Activated T-helper 2 cell treated with anti-CD3 and anti-CD28 coated beads, Interferon-gamma antibody, Interleukin-2, Interleukin-4, amounts not matched to agents 10 μg/mL and 5 μg/mL and 100 μg/mL, durations not matched to agents 14 hours and 24 hours and 36 hours (primary cell): ENCODE measurements at regions of chr13 and their contacts with region 1.

Region 1: DNA sequence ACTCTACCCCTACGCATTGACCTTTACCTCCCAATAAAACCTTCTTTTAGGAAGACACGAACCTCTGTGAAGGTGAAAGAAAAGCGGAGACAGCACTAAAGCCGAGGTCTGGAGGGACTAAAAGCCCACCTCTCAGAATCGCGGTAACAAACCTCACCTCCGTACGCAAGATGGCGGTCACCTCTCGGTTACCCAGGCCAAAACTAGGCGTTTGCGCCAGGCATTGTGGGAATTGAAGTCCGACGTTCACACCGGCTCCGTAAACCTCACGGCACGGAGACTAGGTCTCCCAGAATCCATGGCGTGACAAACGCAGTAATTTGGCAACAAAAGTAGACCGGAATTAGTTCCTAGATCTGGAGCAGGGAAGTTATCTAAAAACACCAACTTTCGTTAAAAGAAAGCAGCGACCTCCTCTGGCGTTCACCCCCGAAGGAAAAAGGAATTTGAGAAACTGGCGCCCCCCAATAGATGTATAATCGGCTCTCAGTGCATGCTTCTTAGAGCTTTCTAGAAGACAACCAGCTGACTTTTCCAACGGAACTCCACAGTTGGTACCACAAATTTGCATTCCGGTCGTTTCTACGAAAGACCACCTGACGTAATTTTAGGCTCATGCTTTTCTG is at the start of gene N4BP2L2:
- DNase-seq: peak; percentile 88
- H3K4me3 Mint-ChIP-seq: peak within 1 kb of the TSS; percentile 93
- H3K27ac Mint-ChIP-seq: peak within 1 kb of the TSS; percentile 98
- H3K4me1 Mint-ChIP-seq: peaks cover 36% of the 10 kb centered on the region
- H3K27me3 Mint-ChIP-seq: no peaks in the 10 kb centered on the region
- total RNA-seq, gene N4BP2L2: 94.3 and 105 TPM in 2 replicates

Region 2: GRCh38 chr13:32315238-32316027 is 223.3 kb before region 1 on chr13 and contains the starts of genes BRCA2 and ZAR1L:
- intact Hi-C with region 1: loop called (anchors 1 kb)
- DNase-seq: peak; percentile 85
- H3K4me3 Mint-ChIP-seq: peak within 1 kb of the TSS; percentile 96
- H3K27ac Mint-ChIP-seq: peak within 1 kb of the TSS; percentile 100
- H3K4me1 Mint-ChIP-seq: peaks cover 32% of the 10 kb centered on the region
- H3K27me3 Mint-ChIP-seq: no peaks in the 10 kb centered on the region
- total RNA-seq, gene BRCA2: 18.6 and 19.4 TPM in 2 replicates
- total RNA-seq, gene ZAR1L: not detected in 2 replicates

Region 3: GRCh38 chr13:32427852-32428580 is 110.7 kb before region 1 on chr13 and contains the start of gene N4BP2L1:
- intact Hi-C with region 1: loop called (anchors 1 kb)
- DNase-seq: peak; percentile 76
- H3K4me3 Mint-ChIP-seq: peak within 1 kb of the TSS; percentile 98
- H3K27ac Mint-ChIP-seq: peak within 1 kb of the TSS; percentile 100
- H3K4me1 Mint-ChIP-seq: peaks cover 39% of the 10 kb centered on the region
- H3K27me3 Mint-ChIP-seq: no peaks in the 10 kb centered on the region
- total RNA-seq, gene N4BP2L1: 26.1 and 28.6 TPM in 2 replicates

Region 4: GRCh38 chr13:32472194-32472621 is 66.5 kb before region 1 on chr13:
- intact Hi-C with region 1: loop called (anchors 2 kb)
- DNase-seq: no peak
- H3K4me3 Mint-ChIP-seq: no peak overlapping the region
- H3K27ac Mint-ChIP-seq: peak overlapping the region; percentile 84
- H3K4me1 Mint-ChIP-seq: peaks cover 16% of the 10 kb centered on the region
- H3K27me3 Mint-ChIP-seq: no peaks in the 10 kb centered on the region

Region 5: DNA sequence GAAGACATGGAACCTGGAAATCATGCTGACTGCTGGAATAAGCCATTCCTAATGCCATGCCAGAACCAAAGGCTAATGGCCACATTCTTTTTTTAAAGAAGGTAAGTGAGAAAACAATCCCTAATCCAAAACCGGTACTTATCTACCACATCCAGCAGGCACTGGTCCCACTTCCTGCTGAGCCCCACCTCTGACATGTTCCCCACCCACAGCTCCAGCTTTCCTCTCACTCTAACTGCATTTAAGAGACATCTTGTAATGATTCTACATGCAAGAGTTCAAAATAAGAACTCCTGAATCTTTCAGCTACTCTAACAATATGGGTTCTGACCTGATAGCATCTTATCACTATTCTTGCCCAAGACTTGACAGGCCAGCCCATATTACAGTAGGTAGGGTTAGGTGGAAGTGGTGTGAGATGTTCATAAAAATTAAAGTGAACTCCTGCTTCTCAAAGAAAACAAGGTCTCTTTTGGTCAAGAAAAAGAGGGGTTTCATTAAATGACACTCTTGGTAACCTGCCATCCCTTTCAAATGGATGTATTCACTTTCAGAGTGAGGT is 42.1 kb before region 1 on chr13:
- intact Hi-C with region 1: no loop called
- DNase-seq: no peak
- H3K4me3 Mint-ChIP-seq: no peak overlapping the region
- H3K27ac Mint-ChIP-seq: no peak overlapping the region
- H3K4me1 Mint-ChIP-seq: peaks cover 11% of the 10 kb centered on the region
- H3K27me3 Mint-ChIP-seq: no peaks in the 10 kb centered on the region

Region 6: DNA sequence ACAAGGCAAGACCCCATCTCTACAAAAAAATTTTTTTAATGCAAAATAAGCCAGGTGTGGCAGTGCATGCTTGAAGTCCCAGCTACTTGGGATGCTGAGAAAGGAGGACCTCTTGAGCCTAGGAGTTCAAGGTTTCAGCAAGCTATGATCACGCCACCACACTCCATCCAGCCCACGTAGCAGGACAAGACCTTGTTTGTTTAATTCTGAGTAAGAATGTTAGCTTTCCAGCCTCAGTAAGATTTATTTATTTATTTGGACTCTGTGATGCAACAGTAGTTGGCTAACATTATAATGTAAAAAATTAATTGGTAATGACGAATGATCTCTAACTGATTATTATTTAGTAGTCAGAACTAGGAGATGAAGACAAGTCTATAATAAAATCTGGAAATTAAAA is 23.5 kb before region 1 on chr13:
- intact Hi-C with region 1: no loop called
- DNase-seq: no peak
- H3K4me3 Mint-ChIP-seq: no peak overlapping the region
- H3K27ac Mint-ChIP-seq: no peak overlapping the region
- H3K4me1 Mint-ChIP-seq: peaks cover 12% of the 10 kb centered on the region
- H3K27me3 Mint-ChIP-seq: no peaks in the 10 kb centered on the region

Region 7: GRCh38 chr13:32650705-32651311 is 112.1 kb after region 1 on chr13:
- intact Hi-C with region 1: loop called (anchors 2 kb)
- DNase-seq: peak; percentile 41
- H3K4me3 Mint-ChIP-seq: no peak overlapping the region
- H3K27ac Mint-ChIP-seq: peak overlapping the region; percentile 70
- H3K4me1 Mint-ChIP-seq: peaks cover 35% of the 10 kb centered on the region
- H3K27me3 Mint-ChIP-seq: no peaks in the 10 kb centered on the region

Region 8: DNA sequence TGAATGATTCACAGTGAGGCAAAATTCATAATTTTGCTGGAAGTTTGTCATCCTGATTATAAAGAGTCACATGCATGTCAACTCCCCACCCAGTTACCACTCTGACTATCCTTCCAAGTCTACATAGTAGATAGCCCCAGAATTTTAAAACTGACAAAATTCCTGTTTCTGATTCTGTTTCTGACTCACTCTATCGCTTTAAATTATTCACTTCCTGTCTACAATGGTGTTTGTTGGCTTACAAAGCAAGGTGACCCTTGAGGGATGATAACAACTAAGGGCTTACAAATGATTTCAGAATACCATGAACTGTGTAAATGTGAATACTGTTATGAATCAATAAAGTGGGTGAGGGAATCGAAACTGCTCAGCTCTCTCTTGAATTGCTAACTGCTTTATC is 378.8 kb after region 1 on chr13:
- intact Hi-C with region 1: loop called (anchors 1 kb)
- DNase-seq: no peak
- H3K4me3 Mint-ChIP-seq: no peak overlapping the region
- H3K27ac Mint-ChIP-seq: peak overlapping the region; percentile 53
- H3K4me1 Mint-ChIP-seq: peaks cover 26% of the 10 kb centered on the region
- H3K27me3 Mint-ChIP-seq: no peaks in the 10 kb centered on the region